Activated CD4-positive, alpha-beta T cell treated with anti-CD3 and anti-CD28 coated beads, Interleukin-2, amount 10 ng/mL, durations not matched to agents 24 days and 14 days (primary cell): ENCODE measurements at regions of chr22 and their contacts with region 1.

Region 1: DNA sequence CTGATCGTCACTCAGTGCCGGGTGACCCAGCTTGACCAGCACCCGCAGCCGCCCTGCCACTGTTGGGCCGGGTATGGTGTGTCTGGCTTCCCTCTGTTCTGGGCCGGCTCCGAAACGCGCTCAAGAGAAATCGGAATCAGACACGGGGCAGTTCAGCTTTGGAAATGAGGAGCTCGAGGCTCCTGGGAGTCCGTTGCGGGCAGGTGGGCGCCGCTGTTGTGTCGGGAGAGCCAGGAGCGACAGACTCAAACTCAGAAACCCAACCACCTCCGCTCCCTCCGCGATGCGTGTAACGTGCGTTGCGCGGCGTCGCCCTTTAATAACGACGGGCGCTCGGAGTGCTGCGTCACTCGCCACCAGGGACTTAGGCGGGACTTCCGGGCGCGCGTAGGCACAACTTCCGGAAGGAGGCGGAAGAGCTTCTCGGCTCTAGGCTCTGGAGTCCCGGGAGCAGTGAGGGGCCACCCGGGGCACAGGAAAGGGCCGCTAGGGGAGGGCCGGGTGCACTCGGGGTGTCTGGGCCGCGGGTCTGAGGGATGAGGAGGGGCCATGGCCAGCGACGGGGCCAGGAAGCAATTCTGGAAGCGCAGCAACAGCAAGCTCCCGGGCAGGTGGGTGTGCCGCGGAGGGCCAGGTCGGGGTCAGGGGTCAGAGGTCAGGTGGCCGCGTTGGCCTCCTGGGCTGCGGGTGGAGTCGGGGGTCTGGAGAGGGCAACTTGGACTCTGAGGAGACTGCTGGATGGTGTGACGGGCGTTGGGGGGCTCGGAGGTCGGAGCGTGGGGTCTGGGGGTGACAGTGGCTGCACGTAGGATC is at the start of gene TBC1D22A:
- DNase-seq: peak; percentile 99
- H3K4me3 Mint-ChIP-seq: peak within 1 kb of the TSS; percentile 97
- H3K27ac Mint-ChIP-seq: peak within 1 kb of the TSS; percentile 99
- H3K4me1 Mint-ChIP-seq: peaks cover 46% of the 10 kb centered on the region
- H3K27me3 Mint-ChIP-seq: no peaks in the 10 kb centered on the region
- total RNA-seq, gene TBC1D22A: 39.2 and 41.0 TPM in 2 replicates

Region 2: GRCh38 chr22:46774253-46774979 is 12.0 kb after region 1 on chr22:
- intact Hi-C with region 1: loop called (anchors 1 kb)
- DNase-seq: no peak
- H3K4me3 Mint-ChIP-seq: peak overlapping the region; percentile 74
- H3K27ac Mint-ChIP-seq: peak overlapping the region; percentile 86
- H3K4me1 Mint-ChIP-seq: peaks cover 63% of the 10 kb centered on the region
- H3K27me3 Mint-ChIP-seq: no peaks in the 10 kb centered on the region

Region 3: GRCh38 chr22:46791201-46791731 is 28.8 kb after region 1 on chr22:
- intact Hi-C with region 1: loop called (anchors 1 kb)
- DNase-seq: peak; percentile 92
- H3K4me3 Mint-ChIP-seq: peak overlapping the region; percentile 82
- H3K27ac Mint-ChIP-seq: peak overlapping the region; percentile 100
- H3K4me1 Mint-ChIP-seq: peaks cover 38% of the 10 kb centered on the region
- H3K27me3 Mint-ChIP-seq: no peaks in the 10 kb centered on the region

Region 4: DNA sequence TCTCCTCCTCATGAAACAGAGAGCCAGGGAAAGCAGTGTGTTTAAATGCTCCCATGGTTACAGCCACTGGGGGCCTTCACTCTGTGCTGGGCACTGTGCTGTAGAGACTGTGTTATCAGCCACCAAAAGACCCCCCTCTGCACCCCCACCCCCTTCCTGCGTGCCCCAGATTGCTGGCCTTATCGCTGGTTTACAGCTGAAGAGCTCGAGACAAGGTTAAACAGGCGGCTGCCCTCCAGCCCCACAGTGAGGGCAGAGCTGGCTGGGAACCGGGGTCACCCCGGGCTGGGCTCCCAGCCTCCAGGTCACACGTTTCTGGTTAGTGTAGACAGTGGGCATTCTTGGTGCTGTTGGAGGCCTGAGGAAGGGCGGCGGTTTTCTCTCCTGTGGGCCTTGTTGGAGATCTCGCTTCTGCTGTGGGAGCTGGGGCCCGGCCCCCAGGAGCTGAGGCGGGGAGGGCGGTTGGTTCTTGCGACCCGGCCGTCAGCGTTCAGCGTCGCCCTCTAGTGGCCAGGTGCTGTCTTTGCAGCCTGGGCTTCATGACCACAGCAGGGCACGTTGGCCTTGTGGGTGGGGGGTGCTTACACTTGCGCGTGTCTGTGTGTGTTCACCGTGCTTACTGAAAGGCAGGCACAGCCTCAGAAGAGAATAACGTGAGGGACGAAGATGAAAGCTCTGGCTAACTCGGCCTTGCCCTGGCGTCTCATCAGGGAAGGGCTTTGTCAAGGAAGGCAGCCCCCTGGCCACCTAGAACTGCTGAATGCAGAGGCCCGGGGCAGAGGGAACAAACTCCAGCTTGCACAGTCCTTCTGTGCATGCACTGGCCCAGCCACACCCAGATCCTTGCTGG is 40.8 kb after region 1 on chr22:
- intact Hi-C with region 1: loop called (anchors 2 kb)
- DNase-seq: peak; percentile 90
- H3K4me3 Mint-ChIP-seq: no peak overlapping the region
- H3K27ac Mint-ChIP-seq: no peak overlapping the region
- H3K4me1 Mint-ChIP-seq: peaks cover 32% of the 10 kb centered on the region
- H3K27me3 Mint-ChIP-seq: no peaks in the 10 kb centered on the region